Heart left ventricle (tissue), 16 donors: ENCODE measurements at regions of chr3 and their contacts with region 1.

Region 1: GRCh38 chr3:170171563-170171962 is 10.0 kb downstream of the PHC3 start:
- DNase-seq: no peak
- ATAC-seq: no peak
- H3K4me3 ChIP-seq: no peak overlapping the region
- H3K27ac ChIP-seq: no peak overlapping the region
- H3K4me1 ChIP-seq: peaks cover 0 to 48% (median 8%) of the 10 kb centered on the region in 12 donors
- H3K27me3 ChIP-seq: no peaks in the 10 kb centered on the region
- CTCF ChIP-seq: no peak
- POLR2A ChIP-seq: no peak

Region 2: DNA sequence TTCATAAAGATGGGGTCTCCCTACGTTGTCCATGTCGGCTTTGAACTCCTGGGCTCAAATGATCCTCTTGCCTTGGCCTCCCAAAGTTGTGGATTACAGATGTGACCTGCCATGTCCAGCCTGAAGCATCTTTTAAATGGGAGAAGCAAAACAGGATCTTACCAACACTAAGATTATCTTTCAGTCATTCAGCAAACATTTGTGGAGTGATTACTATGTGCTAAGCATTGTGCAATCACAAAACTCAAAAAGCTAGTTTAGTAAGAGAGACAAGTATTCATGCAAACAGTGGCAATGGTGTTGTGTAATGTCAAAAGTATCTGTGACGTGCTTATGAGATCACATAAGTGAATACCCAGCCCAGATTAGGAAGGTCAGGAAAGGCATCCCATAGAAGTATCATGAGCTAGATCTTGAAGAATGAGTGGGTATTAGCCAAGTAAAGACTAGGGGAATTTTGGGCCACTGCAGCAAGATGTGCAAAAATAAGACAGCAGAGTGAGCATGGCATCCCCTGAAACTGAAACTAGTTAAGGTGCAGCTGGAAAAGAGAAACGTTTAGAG is 172.9 kb before region 1 on chr3:
- intact Hi-C with region 1: loop called in 1 of 10 experiments (anchors 10 kb)
- DNase-seq: no peak
- ATAC-seq: peak in 1 of 4 donors; percentile 14
- H3K4me3 ChIP-seq: no peak overlapping the region
- H3K27ac ChIP-seq: no peak overlapping the region
- H3K4me1 ChIP-seq: peaks cover 0 to 29% (median 10%) of the 10 kb centered on the region in 12 donors
- H3K27me3 ChIP-seq: no peaks in the 10 kb centered on the region
- CTCF ChIP-seq: no peak
- POLR2A ChIP-seq: no peak